ENCODE measurements at regions of chr2 and their contacts with region 1.

Region 1: GRCh38 chr2:75064691-75065396 is 106.4 kb downstream of the POLE4 start:
- DNase-seq: peak; percentile 72
- H3K4me3 ChIP-seq: no peak overlapping the region
- H3K27ac ChIP-seq: no peak overlapping the region
- H3K4me1 ChIP-seq: no peaks in the 10 kb centered on the region
- H3K27me3 ChIP-seq: no peaks in the 10 kb centered on the region
- CTCF ChIP-seq: peak; percentile 97

Region 2: GRCh38 chr2:74975016-74975415 is 89.8 kb before region 1 on chr2:
- CTCF ChIA-PET with region 1: no interaction called
- POLR2A ChIA-PET with region 1: no interaction called
- intact Hi-C with region 1: no loop called
- DNase-seq: no peak
- H3K4me3 ChIP-seq: no peak overlapping the region
- H3K27ac ChIP-seq: no peak overlapping the region
- H3K4me1 ChIP-seq: no peaks in the 10 kb centered on the region
- H3K27me3 ChIP-seq: no peaks in the 10 kb centered on the region
- CTCF ChIP-seq: no peak

Region 3: DNA sequence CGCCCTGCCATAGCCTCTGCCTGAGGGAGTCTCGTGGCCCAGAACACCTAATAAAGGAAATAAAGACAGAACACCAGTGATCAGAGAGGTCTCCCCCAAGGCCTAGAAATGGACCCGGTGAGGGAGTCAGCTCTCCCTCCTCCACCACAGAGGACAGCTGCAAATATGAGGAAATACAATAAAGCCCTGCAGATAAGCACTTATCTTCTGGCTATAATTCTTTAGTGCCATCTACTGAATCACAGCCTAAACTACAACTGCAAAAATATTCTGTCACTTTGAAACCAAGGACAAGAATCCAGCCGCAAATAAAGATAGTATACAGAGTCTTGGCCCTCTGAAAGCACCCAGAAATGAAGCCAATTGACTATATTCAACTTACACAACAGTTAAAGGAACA is 176.9 kb after region 1 on chr2:
- CTCF ChIA-PET with region 1: no interaction called
- POLR2A ChIA-PET with region 1: no interaction called
- intact Hi-C with region 1: loop called (anchors 2 kb)
- DNase-seq: peak; percentile 29
- H3K4me3 ChIP-seq: no peak overlapping the region
- H3K27ac ChIP-seq: no peak overlapping the region
- H3K4me1 ChIP-seq: no peaks in the 10 kb centered on the region
- H3K27me3 ChIP-seq: no peaks in the 10 kb centered on the region
- CTCF ChIP-seq: peak; percentile 58